Dendritic cell treated with granulocyte-macrophage colony-stimulating factor and Interleukin-4, amounts not matched to agents 40 ng/mL and 50 ng/mL, for 4 days (primary cell): ENCODE measurements at regions of chr1 and their contacts with region 1.

Region 1: DNA sequence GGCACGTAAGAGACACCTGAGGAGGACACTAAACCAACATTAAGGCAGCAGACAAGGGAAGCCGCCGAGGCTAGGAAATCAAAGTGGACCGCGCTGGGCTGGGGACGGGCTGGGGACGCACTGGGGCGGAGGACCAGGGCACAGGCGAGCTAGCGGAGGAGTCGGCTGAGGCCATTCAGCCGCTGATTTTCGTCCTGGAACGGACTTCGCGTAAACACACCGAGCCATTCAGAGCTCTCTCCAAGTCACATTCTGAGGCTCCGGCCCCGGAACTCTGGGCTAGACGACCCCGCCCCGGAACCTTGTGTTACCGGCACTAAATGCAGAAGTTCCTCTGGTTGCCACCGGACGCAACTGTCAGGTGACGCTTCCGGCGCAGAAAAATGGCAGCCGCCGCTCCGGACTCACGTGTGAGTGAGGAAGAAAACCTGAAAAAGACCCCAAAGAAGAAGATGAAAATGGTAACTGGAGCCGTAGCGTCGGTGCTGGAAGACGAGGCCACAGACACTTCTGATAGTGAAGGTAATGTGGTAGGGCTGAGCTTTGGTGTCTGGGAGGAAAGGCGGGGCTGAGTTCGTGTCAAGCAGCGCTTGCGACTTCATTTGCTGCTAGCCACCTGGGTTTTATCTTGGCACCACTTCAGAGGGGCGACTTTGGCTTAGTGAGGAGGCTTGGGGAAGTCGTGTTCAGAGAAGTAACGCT is at the start of gene RRP15:
- H3K4me3 Mint-ChIP-seq: peak within 1 kb of the TSS; percentile 86
- H3K27ac Mint-ChIP-seq: peak within 1 kb of the TSS; percentile 85
- H3K4me1 Mint-ChIP-seq: peaks cover 22% of the 10 kb centered on the region
- H3K27me3 Mint-ChIP-seq: peaks cover 10% of the 10 kb centered on the region

Region 2: DNA sequence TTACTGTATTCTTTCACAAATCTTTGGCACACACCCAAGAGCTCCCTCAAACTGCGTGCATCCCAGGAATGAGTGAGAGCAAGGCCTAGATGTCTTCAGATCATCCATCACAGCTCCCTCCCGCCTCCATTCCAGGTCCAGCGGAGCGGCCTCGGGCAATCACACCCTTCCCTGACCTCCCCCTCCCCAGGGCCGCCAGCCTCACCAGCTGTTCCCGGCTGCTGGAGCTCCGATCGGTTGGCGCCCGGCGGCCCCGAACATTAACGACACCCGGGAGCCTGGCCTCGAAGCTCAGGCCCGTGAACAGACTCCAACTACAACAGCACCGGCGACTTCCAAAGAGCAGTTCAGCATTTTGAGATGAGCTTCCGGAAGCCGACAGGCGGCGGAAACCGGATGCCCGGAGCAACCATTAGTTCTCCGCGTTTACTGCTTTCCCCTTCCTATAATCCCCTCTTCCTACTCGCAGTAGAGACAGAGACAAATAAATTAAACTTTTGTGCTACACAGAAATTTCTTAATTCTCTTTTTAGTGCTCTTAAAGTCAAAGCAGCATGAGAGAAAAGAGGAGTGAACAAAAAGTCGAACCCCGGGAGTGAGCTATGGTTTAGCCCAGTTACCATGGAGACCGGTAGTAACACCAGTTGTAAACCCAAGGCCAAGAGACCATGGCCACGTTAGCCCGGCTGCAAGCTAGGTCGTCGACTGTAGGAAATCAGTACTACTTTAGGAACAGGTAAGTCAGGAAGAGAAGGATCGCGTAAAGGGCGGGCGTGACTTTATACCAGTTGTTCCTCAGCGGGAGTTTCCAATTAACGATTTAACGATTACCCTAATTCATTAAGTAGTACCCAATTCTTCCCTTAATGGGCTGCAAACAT is 654.1 kb before region 1 on chr1 and contains the starts of genes GPATCH2 and SPATA17:
- intact Hi-C with region 1: loop called (anchors 10 kb)
- H3K4me3 Mint-ChIP-seq: peak within 1 kb of the TSS; percentile 95
- H3K27ac Mint-ChIP-seq: peak within 1 kb of the TSS; percentile 97
- H3K4me1 Mint-ChIP-seq: peaks cover 14% of the 10 kb centered on the region
- H3K27me3 Mint-ChIP-seq: peaks cover 6% of the 10 kb centered on the region

Region 3: DNA sequence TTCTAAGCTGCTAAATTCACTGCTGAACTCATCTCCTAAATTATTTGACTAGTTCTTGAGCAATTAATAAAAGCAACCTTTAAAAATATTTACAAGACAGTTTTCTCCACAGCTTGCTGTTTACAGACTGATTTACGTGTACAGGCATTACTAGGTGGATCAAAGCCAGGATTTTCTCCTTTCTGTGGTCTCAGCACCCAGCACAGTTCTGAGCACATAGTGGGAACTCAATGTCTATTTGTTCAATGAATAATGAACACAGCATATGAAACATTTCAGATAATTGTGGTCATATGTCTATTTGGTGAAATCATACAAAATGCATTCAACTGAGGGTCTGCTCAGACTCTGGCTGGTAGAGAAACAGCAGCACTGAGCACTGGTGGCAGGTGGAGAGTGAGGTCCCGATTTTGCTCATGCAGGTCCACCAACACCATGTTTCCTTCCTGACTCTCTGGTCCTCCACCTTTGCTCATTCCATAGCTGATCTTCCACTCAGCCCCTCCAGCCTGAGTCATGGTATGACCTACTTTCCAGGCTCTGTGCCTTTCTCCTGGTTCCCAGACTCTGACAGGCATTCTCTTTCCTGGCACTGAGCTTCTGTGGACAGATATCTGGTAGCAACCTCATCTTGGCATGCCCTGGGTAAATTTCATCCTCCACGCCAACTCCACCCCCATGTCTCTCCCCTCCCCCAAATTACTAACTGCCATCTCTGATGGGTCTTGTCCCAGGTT is 371.4 kb after region 1 on chr1:
- intact Hi-C with region 1: no loop called
- H3K4me3 Mint-ChIP-seq: no peak overlapping the region
- H3K27ac Mint-ChIP-seq: no peak overlapping the region
- H3K4me1 Mint-ChIP-seq: no peaks in the 10 kb centered on the region
- H3K27me3 Mint-ChIP-seq: no peaks in the 10 kb centered on the region